Panc1 (cell line): ENCODE measurements at regions of chr1 and their contacts with region 1.

Region 1: DNA sequence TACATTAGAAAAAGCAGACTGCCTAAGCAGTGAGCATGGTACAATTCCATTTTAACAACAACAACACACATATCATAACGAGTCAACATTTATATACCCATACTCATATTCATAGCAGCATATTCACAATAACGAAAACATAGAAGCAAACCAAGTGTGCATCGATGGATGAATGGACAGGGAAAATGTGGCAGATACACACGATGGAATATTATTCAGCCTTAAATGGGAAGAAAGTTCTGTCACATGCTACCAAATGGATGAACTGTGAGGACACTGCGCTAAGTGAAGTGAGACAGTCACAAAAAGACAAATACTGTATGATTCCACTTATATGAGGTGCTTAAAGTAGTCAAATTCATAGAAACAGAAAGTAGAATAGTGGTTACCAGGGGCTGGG is 9.5 kb upstream of the MAN1C1 start:
- DNase-seq: no peak
- ATAC-seq: no peak
- H3K4me3 ChIP-seq: no peak overlapping the region
- H3K27ac ChIP-seq: no peak overlapping the region
- H3K4me1 ChIP-seq: peaks cover 14% of the 10 kb centered on the region
- H3K27me3 ChIP-seq: peaks cover 22% of the 10 kb centered on the region
- CTCF ChIP-seq: no peak

Region 2: DNA sequence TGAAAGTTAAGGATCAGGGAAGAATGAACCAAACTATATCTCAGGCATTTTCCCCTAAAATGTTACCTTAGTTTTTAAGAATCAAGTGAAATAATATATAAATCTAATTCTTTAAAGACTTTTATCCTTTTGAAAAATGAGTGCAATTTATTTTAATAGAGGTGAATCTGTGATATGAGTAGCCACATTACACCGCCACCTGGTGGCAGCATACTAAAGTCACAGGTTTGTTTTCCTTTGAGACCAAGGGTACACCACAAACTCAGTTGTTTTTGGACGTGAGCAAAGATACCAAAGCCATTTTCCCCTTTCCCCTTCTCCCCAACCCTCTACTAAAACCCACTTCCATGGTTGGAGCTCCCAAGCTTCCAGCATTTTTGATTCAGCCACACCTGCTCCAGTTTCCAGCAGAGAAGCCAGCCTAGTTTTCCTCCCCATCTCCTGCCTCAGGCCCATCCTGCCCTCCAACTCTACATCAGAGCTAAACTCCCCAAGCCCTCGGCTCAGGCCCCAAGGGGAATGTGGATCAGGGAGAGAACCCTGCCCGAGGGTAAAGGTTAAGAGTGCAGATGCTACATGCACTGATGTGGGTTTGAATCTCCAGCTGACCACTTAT is 86.6 kb before region 1 on chr1:
- CTCF ChIA-PET with region 1: no interaction called
- POLR2A ChIA-PET with region 1: no interaction called
- in situ Hi-C with region 1: no loop called
- intact Hi-C with region 1: no loop called
- DNase-seq: peak; percentile 46
- ATAC-seq: peak; percentile 71; the same call in 1 of the 2 replicates
- H3K4me3 ChIP-seq: no peak overlapping the region
- H3K27ac ChIP-seq: no peak overlapping the region
- H3K4me1 ChIP-seq: no peaks in the 10 kb centered on the region
- H3K27me3 ChIP-seq: no peaks in the 10 kb centered on the region
- CTCF ChIP-seq: peak; percentile 88

Region 3: GRCh38 chr1:25531082-25531461 is 76.1 kb before region 1 on chr1:
- CTCF ChIA-PET with region 1: no interaction called
- POLR2A ChIA-PET with region 1: no interaction called
- in situ Hi-C with region 1: no loop called
- intact Hi-C with region 1: no loop called
- DNase-seq: no peak
- ATAC-seq: no peak
- H3K4me3 ChIP-seq: no peak overlapping the region
- H3K27ac ChIP-seq: no peak overlapping the region
- H3K4me1 ChIP-seq: no peaks in the 10 kb centered on the region; the same call in 1 of the 2 replicates
- H3K27me3 ChIP-seq: no peaks in the 10 kb centered on the region
- CTCF ChIP-seq: no peak

Region 4: DNA sequence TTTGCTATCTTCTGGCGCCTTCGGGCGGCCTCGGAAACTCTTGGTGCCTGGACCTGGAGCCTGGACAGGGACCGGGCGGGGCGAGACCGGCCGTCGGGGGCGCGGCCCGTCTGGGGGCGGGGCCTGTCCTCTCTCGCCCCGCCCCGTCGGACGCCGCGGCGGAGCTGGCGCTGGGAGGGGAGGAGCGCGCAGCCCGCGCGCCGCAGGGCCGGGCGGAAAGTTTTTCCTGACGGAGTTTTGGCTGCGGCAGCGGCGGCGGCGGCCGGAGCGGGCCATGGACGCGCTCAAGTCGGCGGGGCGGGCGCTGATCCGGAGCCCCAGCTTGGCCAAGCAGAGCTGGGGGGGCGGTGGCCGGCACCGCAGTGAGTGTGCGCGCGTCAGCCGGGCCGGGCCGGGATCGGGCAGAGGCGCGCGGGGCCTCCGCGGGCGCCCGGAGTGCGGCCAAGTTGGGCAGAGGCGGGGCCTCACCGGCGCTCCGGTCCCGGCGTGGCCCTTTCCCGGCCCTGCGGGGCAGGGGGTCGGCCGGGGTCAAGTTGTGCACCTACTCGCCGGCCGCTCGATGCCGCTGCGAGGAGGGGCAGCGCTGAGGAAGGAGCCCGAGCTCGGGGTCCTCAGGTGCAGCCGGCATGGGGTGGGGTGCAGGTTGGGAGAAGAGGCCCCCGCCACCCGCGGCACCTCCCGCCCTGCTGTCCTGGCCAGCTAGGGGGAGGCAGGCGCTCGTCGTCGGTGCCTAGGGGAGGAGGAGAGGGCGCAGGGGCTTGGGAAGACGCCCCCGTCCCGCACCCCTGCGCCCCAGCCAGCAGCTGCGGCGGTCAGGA is 63.5 kb before region 1 on chr1 and contains the start of gene LDLRAP1:
- CTCF ChIA-PET with region 1: no interaction called
- POLR2A ChIA-PET with region 1: interaction called, 10 read pairs
- in situ Hi-C with region 1: no loop called
- intact Hi-C with region 1: no loop called
- DNase-seq: no peak
- ATAC-seq: peak; percentile 93
- H3K4me3 ChIP-seq: peak within 1 kb of the TSS; percentile 63 to 69
- H3K27ac ChIP-seq: peak within 1 kb of the TSS; percentile 69
- H3K4me1 ChIP-seq: peaks cover 9% of the 10 kb centered on the region
- H3K27me3 ChIP-seq: no peaks in the 10 kb centered on the region
- CTCF ChIP-seq: no peak
- total RNA-seq, gene LDLRAP1: 23.1 TPM

Region 5: GRCh38 chr1:25580927-25581326 is 26.2 kb before region 1 on chr1:
- CTCF ChIA-PET with region 1: no interaction called
- POLR2A ChIA-PET with region 1: no interaction called
- in situ Hi-C with region 1: no loop called
- intact Hi-C with region 1: no loop called
- DNase-seq: no peak
- ATAC-seq: no peak
- H3K4me3 ChIP-seq: no peak overlapping the region
- H3K27ac ChIP-seq: no peak overlapping the region
- H3K4me1 ChIP-seq: no peaks in the 10 kb centered on the region
- H3K27me3 ChIP-seq: no peaks in the 10 kb centered on the region
- CTCF ChIP-seq: no peak